ENCODE measurements at regions of chr20 and their contacts with region 1.

Region 1: GRCh38 chr20:1212607-1213396 is 9.5 kb downstream of the C20orf202 start:
- DNase-seq: peak; percentile 59
- H3K4me3 Mint-ChIP-seq: no peak overlapping the region
- H3K27ac Mint-ChIP-seq: no peak overlapping the region
- H3K4me1 Mint-ChIP-seq: peaks cover 38% of the 10 kb centered on the region
- H3K27me3 Mint-ChIP-seq: peaks cover 11% of the 10 kb centered on the region

Region 2: DNA sequence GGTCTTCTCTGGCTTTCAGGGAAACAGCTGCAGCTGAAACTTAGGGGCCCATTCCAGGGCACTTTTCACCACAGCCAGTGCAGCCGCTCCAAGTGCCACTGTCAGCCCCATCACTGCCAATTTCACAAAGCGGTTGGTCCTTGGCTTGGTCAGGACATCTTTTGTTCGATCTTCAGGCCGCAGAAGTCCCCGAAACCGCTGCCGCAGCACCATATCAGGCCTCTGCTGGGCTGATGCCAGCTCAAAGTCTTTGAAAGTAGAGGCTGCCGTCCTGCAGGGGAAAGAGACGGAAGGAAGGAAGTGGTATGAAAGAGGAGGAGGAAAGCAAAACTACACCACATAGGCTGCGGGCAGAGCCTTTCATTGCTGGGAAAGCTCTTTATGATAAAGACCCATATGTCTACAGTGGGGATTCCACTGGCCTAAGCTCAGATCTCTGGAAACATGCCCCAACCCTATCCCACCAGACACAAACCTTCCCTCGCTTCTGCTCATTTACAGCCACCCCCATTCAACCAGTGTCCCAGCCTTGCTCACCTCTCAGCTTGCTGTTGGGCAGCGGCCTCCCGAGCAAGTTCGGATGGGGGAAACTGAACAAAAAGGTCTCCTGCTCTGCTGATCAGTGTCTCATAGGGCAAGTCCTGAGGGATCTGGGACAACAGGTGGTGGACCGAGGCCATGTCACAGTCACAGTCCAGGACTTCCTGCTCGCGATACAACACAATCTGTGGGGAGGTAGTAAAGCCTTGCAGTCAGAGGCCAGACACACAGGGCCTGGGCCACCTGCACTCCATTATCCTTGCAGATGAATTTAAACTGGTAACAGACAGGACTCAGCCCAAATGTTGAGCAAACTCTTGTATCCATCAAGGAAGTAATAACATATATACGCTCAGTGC is 774.0 kb before region 1 on chr20:
- intact Hi-C with region 1: no loop called
- DNase-seq: peak; percentile 58
- H3K4me3 Mint-ChIP-seq: peak overlapping the region; percentile 77
- H3K27ac Mint-ChIP-seq: peak overlapping the region; percentile 85
- H3K4me1 Mint-ChIP-seq: peaks cover 79% of the 10 kb centered on the region
- H3K27me3 Mint-ChIP-seq: no peaks in the 10 kb centered on the region

Region 3: GRCh38 chr20:956330-956951 is 256.4 kb before region 1 on chr20:
- intact Hi-C with region 1: loop called (anchors 5 kb)
- DNase-seq: peak; percentile 65
- H3K4me3 Mint-ChIP-seq: no peak overlapping the region
- H3K27ac Mint-ChIP-seq: no peak overlapping the region
- H3K4me1 Mint-ChIP-seq: no peaks in the 10 kb centered on the region
- H3K27me3 Mint-ChIP-seq: peaks cover 20% of the 10 kb centered on the region

Region 4: DNA sequence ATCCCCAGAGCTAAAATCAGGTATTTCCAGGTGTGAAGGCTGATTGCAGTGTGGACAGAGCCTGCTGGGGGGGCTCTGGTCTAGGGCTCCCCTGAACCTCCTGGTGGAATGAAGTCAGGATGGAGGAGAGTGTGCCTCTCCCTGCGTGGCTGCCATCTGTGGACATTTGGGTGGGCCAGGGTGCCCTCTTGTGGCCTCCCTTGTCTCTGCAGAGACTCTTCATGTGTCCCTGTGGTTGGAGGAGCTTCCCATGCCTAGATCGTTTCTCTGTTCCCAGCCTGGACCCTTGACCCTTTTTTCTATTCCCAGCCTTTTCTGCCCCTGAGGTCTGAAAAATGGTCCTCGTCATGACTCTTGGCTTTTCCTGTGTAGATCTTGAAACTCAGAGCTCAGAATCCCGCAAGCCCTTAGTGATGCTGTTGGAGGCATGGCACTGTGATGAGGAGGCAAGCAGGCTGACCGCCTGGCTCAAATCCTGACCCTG is 104.3 kb before region 1 on chr20:
- intact Hi-C with region 1: loop called (anchors 1 kb)
- DNase-seq: peak; percentile 25
- H3K4me3 Mint-ChIP-seq: no peak overlapping the region
- H3K27ac Mint-ChIP-seq: no peak overlapping the region
- H3K4me1 Mint-ChIP-seq: peaks cover 5% of the 10 kb centered on the region
- H3K27me3 Mint-ChIP-seq: peaks cover 5% of the 10 kb centered on the region

Region 5: DNA sequence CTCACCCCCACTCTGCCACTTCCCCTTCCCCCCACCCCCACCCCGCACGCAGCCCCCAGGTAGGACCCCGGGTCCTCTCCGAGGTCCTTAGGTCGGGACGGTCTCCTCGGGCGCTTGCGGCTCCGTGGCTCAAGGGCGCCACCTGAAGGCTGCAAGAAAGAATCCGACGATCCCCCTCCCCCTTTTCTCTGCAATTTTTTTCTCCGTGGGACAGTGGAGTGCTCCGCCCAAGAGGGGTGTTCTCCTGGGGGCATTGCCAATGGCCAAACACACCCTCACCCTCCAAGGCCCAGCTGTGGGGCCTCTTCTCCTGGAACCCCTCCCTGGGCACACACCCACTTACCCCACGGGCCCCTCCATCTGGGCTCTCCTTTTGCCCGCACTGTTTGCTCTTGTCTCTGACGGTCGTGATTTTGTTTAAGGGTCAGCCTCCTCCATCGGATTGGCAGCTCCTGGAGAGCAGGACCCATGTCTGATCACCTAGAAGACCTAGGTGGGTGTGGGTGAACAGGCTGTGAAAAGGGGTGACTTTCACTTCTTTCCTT is 26.9 kb before region 1 on chr20:
- intact Hi-C with region 1: loop called (anchors 2 kb)
- DNase-seq: peak; percentile 43
- H3K4me3 Mint-ChIP-seq: peak overlapping the region; percentile 71
- H3K27ac Mint-ChIP-seq: no peak overlapping the region
- H3K4me1 Mint-ChIP-seq: peaks cover 6% of the 10 kb centered on the region
- H3K27me3 Mint-ChIP-seq: peaks cover 34% of the 10 kb centered on the region

Region 6: DNA sequence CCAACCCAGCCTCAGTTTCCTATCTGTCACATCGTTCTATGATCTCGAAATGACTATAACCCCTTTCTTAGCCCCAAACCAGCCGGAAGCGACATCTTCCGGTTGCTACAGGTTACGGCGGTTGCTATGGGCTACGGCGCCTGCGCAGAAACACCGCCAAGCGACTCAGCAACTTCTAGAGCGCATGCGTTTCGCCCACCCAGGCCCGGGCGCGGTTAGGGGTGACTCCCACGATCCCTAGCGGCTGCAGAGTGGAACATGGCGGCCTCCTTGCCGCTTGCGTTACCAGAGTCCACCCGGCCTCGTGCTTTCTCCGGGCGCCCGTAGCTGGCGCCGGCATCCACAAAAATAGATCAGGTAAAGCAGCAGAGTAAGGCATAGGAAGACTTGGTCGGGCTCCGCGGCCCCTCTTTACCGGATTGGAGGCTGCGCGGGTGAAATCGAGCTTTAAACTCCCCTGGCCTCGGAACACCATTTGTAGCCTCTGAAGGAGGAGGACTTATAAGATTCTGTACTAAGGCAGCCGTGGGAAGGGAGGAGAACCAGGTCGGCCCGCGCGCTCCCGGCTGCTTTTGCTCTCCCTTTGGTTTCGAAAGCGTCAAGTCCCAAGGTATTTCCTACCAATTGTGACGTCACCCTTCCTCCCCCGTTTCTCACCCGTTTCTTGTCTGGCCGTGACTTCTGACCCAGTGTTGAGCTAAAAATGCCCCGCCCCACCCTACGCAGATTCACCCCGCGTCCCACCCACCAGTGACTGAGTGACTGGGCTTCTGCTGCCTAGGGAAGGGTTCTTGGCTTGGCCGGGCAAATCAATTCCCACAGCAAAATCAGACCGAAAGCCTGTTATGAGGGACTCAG is 112.6 kb after region 1 on chr20:
- intact Hi-C with region 1: loop called (anchors 1 kb)
- DNase-seq: peak; percentile 98
- H3K4me3 Mint-ChIP-seq: no peak overlapping the region
- H3K27ac Mint-ChIP-seq: no peak overlapping the region
- H3K4me1 Mint-ChIP-seq: peaks cover 14% of the 10 kb centered on the region
- H3K27me3 Mint-ChIP-seq: peaks cover 6% of the 10 kb centered on the region

Region 7: DNA sequence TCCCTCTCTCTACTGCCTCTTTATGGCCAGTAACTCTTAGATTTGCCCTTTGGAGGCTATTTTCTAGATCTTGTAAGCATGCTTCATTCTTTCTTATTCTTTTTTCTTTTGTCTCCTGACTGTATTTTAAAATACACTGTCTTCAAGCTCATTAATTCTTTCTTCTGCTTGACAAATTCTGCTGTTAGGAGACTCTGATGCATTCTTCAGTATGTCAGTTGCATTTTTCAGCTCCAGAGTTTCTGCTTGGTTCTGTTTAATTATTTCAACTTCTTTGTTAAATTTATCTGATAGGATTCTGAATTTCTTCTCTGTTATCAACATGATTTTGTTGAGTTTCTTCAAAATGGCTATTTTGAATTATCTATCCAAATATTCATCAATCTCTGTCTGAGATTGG is 141.2 kb after region 1 on chr20:
- intact Hi-C with region 1: no loop called
- DNase-seq: no peak
- H3K4me3 Mint-ChIP-seq: no peak overlapping the region
- H3K27ac Mint-ChIP-seq: no peak overlapping the region
- H3K4me1 Mint-ChIP-seq: peaks cover 22% of the 10 kb centered on the region
- H3K27me3 Mint-ChIP-seq: no peaks in the 10 kb centered on the region

Region 8: GRCh38 chr20:2470423-2471193 is 1257.8 kb after region 1 on chr20 and contains the start of gene SNRPB:
- intact Hi-C with region 1: no loop called
- DNase-seq: peak; percentile 96
- H3K4me3 Mint-ChIP-seq: peak within 1 kb of the TSS; percentile 99
- H3K27ac Mint-ChIP-seq: peak within 1 kb of the TSS; percentile 97
- H3K4me1 Mint-ChIP-seq: peaks cover 58% of the 10 kb centered on the region
- H3K27me3 Mint-ChIP-seq: no peaks in the 10 kb centered on the region
- total RNA-seq, gene SNRPB: 533 and 548 TPM in 2 replicates